ENCODE measurements at regions of chr2 and their contacts with region 1.

Region 1: GRCh38 chr2:83933749-83934148 is 525.3 kb downstream of the SUCLG1 start:
- DNase-seq: no peak
- H3K4me3 ChIP-seq: no peak overlapping the region
- H3K4me3 Mint-ChIP-seq: no peak overlapping the region
- H3K27ac Mint-ChIP-seq: no peak overlapping the region
- H3K4me1 ChIP-seq: no peaks in the 10 kb centered on the region
- H3K4me1 Mint-ChIP-seq: no peaks in the 10 kb centered on the region
- H3K27me3 ChIP-seq: no peaks in the 10 kb centered on the region
- H3K27me3 Mint-ChIP-seq: peaks cover 7% of the 10 kb centered on the region
- CTCF ChIP-seq: no peak

Region 2: DNA sequence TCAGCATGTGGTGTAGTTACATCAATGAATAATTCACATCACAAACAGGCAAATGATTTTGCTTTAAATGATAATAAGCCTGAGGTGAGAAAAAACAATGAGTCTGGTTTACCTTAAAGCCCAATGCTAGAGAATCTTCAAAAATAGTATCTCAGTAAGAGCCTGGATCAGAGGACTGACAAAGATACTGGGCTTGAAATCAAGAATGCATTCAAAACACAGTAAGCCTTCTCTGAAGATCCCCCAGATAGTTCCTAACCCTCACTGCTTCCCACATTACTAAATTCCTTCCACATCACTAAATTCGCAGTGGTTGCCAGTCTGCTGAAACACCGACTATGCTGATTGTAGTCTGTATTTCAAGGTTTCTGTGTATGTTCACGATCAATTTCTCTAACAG is 10.4 kb after region 1 on chr2:
- CTCF ChIA-PET with region 1: no interaction called
- POLR2A ChIA-PET with region 1: no interaction called
- intact Hi-C with region 1: no loop called
- DNase-seq: no peak
- H3K4me3 ChIP-seq: no peak overlapping the region
- H3K4me3 Mint-ChIP-seq: no peak overlapping the region
- H3K27ac Mint-ChIP-seq: no peak overlapping the region
- H3K4me1 ChIP-seq: no peaks in the 10 kb centered on the region
- H3K4me1 Mint-ChIP-seq: no peaks in the 10 kb centered on the region
- H3K27me3 ChIP-seq: no peaks in the 10 kb centered on the region
- H3K27me3 Mint-ChIP-seq: no peaks in the 10 kb centered on the region
- CTCF ChIP-seq: no peak

Region 3: GRCh38 chr2:84132370-84132769 is 198.6 kb after region 1 on chr2:
- CTCF ChIA-PET with region 1: no interaction called
- POLR2A ChIA-PET with region 1: no interaction called
- intact Hi-C with region 1: loop called (anchors 1 kb)
- DNase-seq: no peak
- H3K4me3 ChIP-seq: no peak overlapping the region
- H3K4me3 Mint-ChIP-seq: no peak overlapping the region
- H3K27ac Mint-ChIP-seq: no peak overlapping the region
- H3K4me1 ChIP-seq: no peaks in the 10 kb centered on the region
- H3K4me1 Mint-ChIP-seq: no peaks in the 10 kb centered on the region
- H3K27me3 ChIP-seq: no peaks in the 10 kb centered on the region
- H3K27me3 Mint-ChIP-seq: peaks cover 3% of the 10 kb centered on the region
- CTCF ChIP-seq: no peak

Region 4: GRCh38 chr2:84481702-84482101 is 548.0 kb after region 1 on chr2:
- CTCF ChIA-PET with region 1: no interaction called
- POLR2A ChIA-PET with region 1: no interaction called
- intact Hi-C with region 1: no loop called
- DNase-seq: no peak
- H3K4me3 ChIP-seq: no peak overlapping the region
- H3K4me3 Mint-ChIP-seq: no peak overlapping the region
- H3K27ac Mint-ChIP-seq: peak overlapping the region; percentile 13
- H3K4me1 ChIP-seq: peaks cover 13% of the 10 kb centered on the region
- H3K4me1 Mint-ChIP-seq: peaks cover 9% of the 10 kb centered on the region
- H3K27me3 ChIP-seq: no peaks in the 10 kb centered on the region
- H3K27me3 Mint-ChIP-seq: no peaks in the 10 kb centered on the region
- CTCF ChIP-seq: no peak

Measured in Caco-2 (cell line).